ENCODE measurements at regions of chr6 and their contacts with region 1.

Region 1: DNA sequence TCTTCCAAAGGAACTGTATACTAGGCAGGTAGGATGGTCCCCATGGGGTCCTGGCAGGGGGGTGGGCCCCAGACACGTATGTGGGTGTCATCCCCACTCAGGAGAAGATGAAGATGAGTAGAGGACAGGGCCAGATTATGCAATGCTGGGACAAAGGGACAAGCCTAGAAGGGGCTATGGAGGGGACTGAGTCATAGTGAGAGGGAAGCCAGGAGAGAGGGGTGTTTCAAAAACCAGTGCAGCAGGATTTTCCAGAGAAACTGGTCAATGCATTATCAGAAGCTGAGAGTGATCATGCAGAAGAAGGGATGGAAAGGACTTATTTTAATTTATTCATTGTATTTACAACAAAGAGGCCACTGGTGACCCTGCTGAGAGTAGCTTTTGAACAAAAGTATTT is 74.0 kb downstream of the PPP1R3G start:
- DNase-seq: peak; percentile 63 to 76
- H3K4me3 ChIP-seq: no peak overlapping the region
- H3K27ac ChIP-seq: 0 out of 2 replicates have a peak overlapping the region, but pooled peaks have one; percentile 23
- H3K4me1 ChIP-seq: peaks cover 20% of the 10 kb centered on the region
- H3K27me3 ChIP-seq: no peaks in the 10 kb centered on the region
- CTCF ChIP-seq: no peak

Region 2: GRCh38 chr6:5096482-5096881 is 62.7 kb before region 1 on chr6:
- CTCF ChIA-PET with region 1: no interaction called
- POLR2A ChIA-PET with region 1: no interaction called
- intact Hi-C with region 1: no loop called
- DNase-seq: no peak
- H3K4me3 ChIP-seq: no peak overlapping the region
- H3K27ac ChIP-seq: no peak overlapping the region
- H3K4me1 ChIP-seq: peaks cover 6% of the 10 kb centered on the region
- H3K27me3 ChIP-seq: no peaks in the 10 kb centered on the region
- CTCF ChIP-seq: no peak

Region 3: GRCh38 chr6:5412017-5412416 is 252.9 kb after region 1 on chr6:
- CTCF ChIA-PET with region 1: interaction called, 10 read pairs
- POLR2A ChIA-PET with region 1: no interaction called
- intact Hi-C with region 1: no loop called
- DNase-seq: no peak
- H3K4me3 ChIP-seq: no peak overlapping the region
- H3K27ac ChIP-seq: no peak overlapping the region
- H3K4me1 ChIP-seq: no peaks in the 10 kb centered on the region
- H3K27me3 ChIP-seq: no peaks in the 10 kb centered on the region
- CTCF ChIP-seq: no peak

Measured in PC-9 (cell line).